ENCODE measurements at regions of chr7 and their contacts with region 1.

Region 1: GRCh38 chr7:151315038-151315655 is 26.5 kb upstream of the NUB1 start:
- DNase-seq: peak in 2 of 3 donors; percentile 42 to 91
- ATAC-seq: peak; percentile 85
- H3K4me3 ChIP-seq: no peak overlapping the region
- H3K4me1 ChIP-seq: peaks cover 8% of the 10 kb centered on the region
- CTCF ChIP-seq: peak; percentile 46

Region 2: GRCh38 chr7:151143261-151144015 is 171.7 kb before region 1 on chr7:
- intact Hi-C with region 1: no loop called
- DNase-seq: no peak
- ATAC-seq: no peak
- H3K4me3 ChIP-seq: no peak overlapping the region
- H3K4me1 ChIP-seq: no peaks in the 10 kb centered on the region
- CTCF ChIP-seq: no peak

Region 3: DNA sequence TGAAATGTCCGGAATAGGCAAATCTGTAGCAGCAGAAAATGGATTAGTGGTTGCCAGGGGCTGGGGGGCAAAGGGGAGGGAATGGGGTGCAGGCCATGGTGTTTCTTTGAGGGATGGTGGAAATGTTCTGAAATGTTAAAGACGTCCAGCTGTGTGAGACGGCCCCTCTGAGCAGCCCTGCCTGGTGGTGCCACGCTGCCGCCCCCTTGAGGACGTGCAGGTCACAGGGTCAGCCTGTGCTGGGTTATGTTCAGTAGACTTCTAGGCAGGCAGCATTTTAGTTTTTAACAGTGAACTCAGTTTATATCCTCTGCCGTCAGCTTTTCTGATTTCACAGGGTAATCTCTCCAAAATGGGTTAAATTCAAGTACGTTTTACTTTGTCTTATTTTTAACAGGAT is 35.9 kb after region 1 on chr7:
- intact Hi-C with region 1: loop called (anchors 2 to 5 kb)
- DNase-seq: peak in 2 of 3 donors; percentile 23 to 43
- ATAC-seq: peak; percentile 22
- H3K4me3 ChIP-seq: no peak overlapping the region
- H3K4me1 ChIP-seq: peaks cover 16% of the 10 kb centered on the region
- CTCF ChIP-seq: no peak

Measured in mucosa of descending colon (tissue), 3 donors.